PC-9 (cell line): ENCODE measurements at regions of chr13 and their contacts with region 1.

Region 1: GRCh38 chr13:52194184-52194868 is 34.9 kb upstream of the NEK3 start:
- DNase-seq: peak; percentile 68 to 84
- H3K4me3 ChIP-seq: peak overlapping the region; percentile 92
- H3K27ac ChIP-seq: peak overlapping the region; percentile 35
- H3K4me1 ChIP-seq: peaks cover 13% of the 10 kb centered on the region
- H3K27me3 ChIP-seq: no peaks in the 10 kb centered on the region
- CTCF ChIP-seq: no peak

Region 2: DNA sequence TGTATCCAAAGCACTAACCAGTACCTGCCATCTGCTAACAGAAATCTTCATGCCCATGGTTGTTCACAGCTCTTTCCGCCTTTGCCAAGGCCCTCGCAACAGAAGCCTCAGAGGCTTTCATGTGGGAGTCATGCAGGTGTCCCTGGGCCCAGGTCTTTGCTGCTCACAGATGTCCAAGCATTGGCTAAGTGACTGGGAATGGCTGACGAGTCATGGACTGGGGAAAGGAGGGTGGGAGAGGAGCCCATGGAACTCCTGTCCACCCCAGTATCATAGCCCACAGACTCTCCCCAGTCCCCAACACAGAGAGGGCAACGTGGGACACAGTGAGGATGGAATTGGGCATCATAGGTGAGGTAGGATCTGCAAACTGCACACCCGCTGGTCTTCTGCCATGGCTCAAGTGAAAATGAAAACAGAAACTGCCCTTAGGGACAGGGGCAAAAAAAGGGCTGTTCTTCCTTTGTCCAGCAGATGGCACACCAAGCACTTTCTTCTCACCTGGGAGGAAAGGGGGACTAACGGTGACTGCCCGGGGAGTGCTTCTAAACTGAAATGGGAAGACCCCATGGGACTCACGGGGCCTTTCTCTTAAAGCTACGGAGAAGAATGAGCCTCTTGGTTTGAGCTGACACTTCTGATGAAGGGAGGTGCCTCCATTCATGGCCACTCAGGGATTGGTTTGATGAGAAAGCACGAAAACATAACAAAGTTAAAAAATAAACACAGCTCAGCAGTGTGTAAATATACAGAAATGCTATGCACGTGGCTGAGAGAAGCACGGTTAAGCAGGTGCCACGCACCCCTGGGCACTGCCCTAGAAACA is 379.3 kb before region 1 on chr13:
- CTCF ChIA-PET with region 1: no interaction called
- POLR2A ChIA-PET with region 1: no interaction called
- intact Hi-C with region 1: loop called (anchors 10 kb)
- DNase-seq: peak; percentile 55 to 66
- H3K4me3 ChIP-seq: peak overlapping the region; percentile 7; the same call in 1 of the 2 replicates
- H3K27ac ChIP-seq: no peak overlapping the region
- H3K4me1 ChIP-seq: peaks cover 10% of the 10 kb centered on the region; the same call in 1 of the 2 replicates
- H3K27me3 ChIP-seq: peaks cover 36% of the 10 kb centered on the region; the same call in 1 of the 2 replicates
- CTCF ChIP-seq: peak; percentile 85

Region 3: GRCh38 chr13:52147225-52147624 is 47.1 kb before region 1 on chr13:
- CTCF ChIA-PET with region 1: no interaction called
- POLR2A ChIA-PET with region 1: no interaction called
- intact Hi-C with region 1: no loop called
- DNase-seq: no peak
- H3K4me3 ChIP-seq: no peak overlapping the region
- H3K27ac ChIP-seq: no peak overlapping the region
- H3K4me1 ChIP-seq: no peaks in the 10 kb centered on the region
- H3K27me3 ChIP-seq: no peaks in the 10 kb centered on the region
- CTCF ChIP-seq: no peak

Region 4: DNA sequence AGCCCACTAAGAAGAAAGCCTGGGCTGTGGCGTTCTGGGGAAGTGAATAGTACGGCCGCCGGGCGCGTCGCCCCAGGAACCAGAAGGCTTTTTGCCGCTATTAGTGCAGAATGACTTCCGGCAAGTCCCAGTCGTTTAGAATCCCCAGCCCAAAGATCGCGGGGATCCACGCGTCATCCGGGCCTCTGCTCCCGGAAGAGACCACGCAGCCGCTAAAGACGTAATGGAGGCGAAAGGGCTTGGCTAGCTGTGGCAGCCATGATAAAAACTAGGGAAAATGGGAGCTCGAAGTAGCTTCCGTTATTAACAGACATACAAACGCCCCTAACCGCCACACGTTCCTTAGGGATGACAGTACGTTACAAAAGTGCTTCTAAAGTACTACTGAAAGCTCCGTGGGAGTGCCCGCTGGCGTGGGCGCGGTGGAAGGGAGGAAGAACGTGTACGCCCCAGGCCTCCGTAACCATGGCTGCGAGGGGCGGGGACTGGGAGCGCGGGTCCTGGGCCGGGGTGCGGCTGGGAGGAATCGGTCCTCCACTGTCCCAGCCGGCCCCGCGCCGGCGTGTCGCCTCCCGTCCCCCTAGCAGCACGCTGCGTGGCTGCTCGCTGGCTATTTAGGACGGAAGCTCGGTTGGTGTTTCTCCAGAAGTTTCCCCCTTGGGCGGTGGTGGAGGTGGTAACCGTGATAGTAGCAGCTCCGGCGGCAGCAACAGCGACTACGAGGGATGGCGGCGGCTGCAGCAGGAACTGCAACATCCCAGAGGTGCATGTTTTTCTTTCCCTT is 458.1 kb after region 1 on chr13 and contains the start of gene SUGT1:
- CTCF ChIA-PET with region 1: no interaction called
- POLR2A ChIA-PET with region 1: interaction called, 3 read pairs
- intact Hi-C with region 1: loop called (anchors 5 kb)
- DNase-seq: peak; percentile 94 to 97
- H3K4me3 ChIP-seq: peak within 1 kb of the TSS; percentile 86
- H3K27ac ChIP-seq: peak within 1 kb of the TSS; percentile 93
- H3K4me1 ChIP-seq: peaks cover 23% of the 10 kb centered on the region
- H3K27me3 ChIP-seq: no peaks in the 10 kb centered on the region
- CTCF ChIP-seq: no peak; the same call in 1 of the 2 replicates
- total RNA-seq, gene SUGT1: 48.8 and 57.2 TPM in 2 replicates

Region 5: DNA sequence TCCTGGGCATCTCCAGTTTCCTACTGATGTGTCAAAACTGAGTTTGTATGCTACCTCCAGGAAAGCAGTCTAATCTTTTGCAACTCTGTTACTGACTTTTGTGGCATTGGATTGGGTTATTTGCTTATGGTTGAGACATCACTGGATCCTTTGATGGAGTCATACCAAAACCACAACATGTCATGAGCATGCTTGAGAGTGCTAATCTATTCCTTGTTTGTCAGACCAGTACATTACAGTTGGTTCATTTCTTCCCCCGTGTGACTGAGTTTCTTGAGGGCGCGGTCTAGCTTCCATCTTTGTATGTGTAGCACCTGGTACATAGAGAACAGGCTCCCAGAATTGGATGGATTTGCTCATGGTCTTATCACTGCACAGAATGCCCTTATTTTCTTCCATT is 501.5 kb after region 1 on chr13:
- CTCF ChIA-PET with region 1: no interaction called
- POLR2A ChIA-PET with region 1: no interaction called
- intact Hi-C with region 1: no loop called
- DNase-seq: no peak
- H3K4me3 ChIP-seq: no peak overlapping the region
- H3K27ac ChIP-seq: no peak overlapping the region
- H3K4me1 ChIP-seq: no peaks in the 10 kb centered on the region
- H3K27me3 ChIP-seq: no peaks in the 10 kb centered on the region
- CTCF ChIP-seq: no peak

Region 6: GRCh38 chr13:52723181-52723580 is 528.9 kb after region 1 on chr13:
- CTCF ChIA-PET with region 1: no interaction called
- POLR2A ChIA-PET with region 1: no interaction called
- intact Hi-C with region 1: no loop called
- DNase-seq: no peak
- H3K4me3 ChIP-seq: no peak overlapping the region
- H3K27ac ChIP-seq: no peak overlapping the region
- H3K4me1 ChIP-seq: no peaks in the 10 kb centered on the region
- H3K27me3 ChIP-seq: peaks cover 86% of the 10 kb centered on the region
- CTCF ChIP-seq: no peak